ENCODE measurements at regions of chr11 and their contacts with region 1.

Region 1: GRCh38 chr11:94543695-94544645 is at the start of gene FUT4:
- DNase-seq: peak; percentile 70
- H3K4me3 Mint-ChIP-seq: peak within 1 kb of the TSS; percentile 98
- H3K27ac Mint-ChIP-seq: peak within 1 kb of the TSS; percentile 99
- H3K4me1 Mint-ChIP-seq: peaks cover 45% of the 10 kb centered on the region
- H3K27me3 Mint-ChIP-seq: peaks cover 5% of the 10 kb centered on the region
- total RNA-seq, gene FUT4: 8.0 and 8.6 TPM in 2 replicates

Region 2: DNA sequence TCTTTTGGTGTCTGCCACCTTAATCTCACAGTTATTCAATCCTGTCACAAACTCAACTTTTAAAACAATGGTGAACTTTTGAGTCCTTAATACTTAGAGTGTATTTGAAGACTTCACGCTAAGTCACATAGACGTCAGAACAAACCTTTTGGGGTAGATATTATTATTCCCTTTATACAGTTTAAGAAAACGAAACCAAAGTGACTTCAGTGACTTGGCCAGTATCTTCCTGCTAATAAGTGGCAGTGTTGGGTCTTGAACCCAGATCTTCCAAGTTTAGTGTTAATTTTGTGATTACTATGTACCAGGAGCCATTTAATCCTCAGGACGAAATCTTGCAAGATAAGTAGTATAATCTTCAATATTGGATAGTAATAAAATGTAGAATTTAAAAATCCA is 881.8 kb before region 1 on chr11:
- intact Hi-C with region 1: loop called (anchors 5 kb)
- DNase-seq: no peak
- H3K4me3 Mint-ChIP-seq: peak overlapping the region; percentile 89
- H3K27ac Mint-ChIP-seq: peak overlapping the region; percentile 86
- H3K4me1 Mint-ChIP-seq: peaks cover 47% of the 10 kb centered on the region
- H3K27me3 Mint-ChIP-seq: no peaks in the 10 kb centered on the region

Region 3: GRCh38 chr11:93784152-93784934 is 759.6 kb before region 1 on chr11 and contains the start of gene MED17:
- intact Hi-C with region 1: loop called (anchors 2 kb)
- DNase-seq: peak; percentile 87
- H3K4me3 Mint-ChIP-seq: peak within 1 kb of the TSS; percentile 93
- H3K27ac Mint-ChIP-seq: peak within 1 kb of the TSS; percentile 88
- H3K4me1 Mint-ChIP-seq: peaks cover 45% of the 10 kb centered on the region
- H3K27me3 Mint-ChIP-seq: no peaks in the 10 kb centered on the region
- total RNA-seq, gene MED17: 55.8 and 59.4 TPM in 2 replicates

Region 4: DNA sequence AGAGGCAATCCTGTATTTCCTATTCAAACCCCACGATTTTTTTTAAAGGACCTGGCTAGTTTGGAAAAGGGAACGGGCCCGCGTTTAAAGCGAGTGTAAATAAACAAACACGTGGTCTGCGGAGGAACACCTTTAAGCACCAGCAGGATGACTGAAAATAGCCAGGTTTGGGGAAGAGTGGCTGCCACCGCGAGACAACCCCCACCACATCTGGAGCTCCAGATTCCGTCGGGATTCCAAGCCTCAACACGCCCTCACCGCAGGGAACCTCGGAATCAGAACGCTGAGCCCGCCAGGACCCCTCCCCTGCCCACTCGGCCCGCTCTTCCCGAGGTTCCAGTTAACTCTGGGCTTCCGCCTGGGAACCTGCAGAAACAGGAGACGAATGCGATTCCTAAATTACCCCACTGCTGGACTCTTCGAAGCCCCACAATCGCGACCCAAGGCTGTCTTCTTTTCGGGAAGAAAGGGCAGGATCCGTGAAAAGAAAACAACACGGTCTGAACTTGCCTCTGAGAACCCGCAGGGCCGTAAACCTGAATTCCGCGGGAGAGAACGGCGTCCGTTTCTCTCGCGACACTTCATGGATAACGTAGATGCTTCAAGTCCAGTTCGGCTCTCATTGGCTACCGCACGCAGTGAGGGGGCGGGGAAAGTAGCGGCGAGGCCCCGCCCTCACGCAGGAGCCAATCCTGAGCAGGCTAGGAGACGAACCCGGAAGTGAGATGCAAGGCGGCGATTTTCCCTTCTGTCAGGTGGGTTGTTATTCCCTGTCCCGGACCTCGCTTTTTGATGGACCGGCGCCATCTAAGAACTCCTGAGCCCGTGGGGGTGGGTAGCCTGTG is 50.5 kb before region 1 on chr11 and contains the starts of genes ANKRD49 and MRE11:
- intact Hi-C with region 1: loop called (anchors 1 kb)
- DNase-seq: peak; percentile 96
- H3K4me3 Mint-ChIP-seq: peak within 1 kb of the TSS; percentile 94
- H3K27ac Mint-ChIP-seq: peak within 1 kb of the TSS; percentile 92
- H3K4me1 Mint-ChIP-seq: peaks cover 36% of the 10 kb centered on the region
- H3K27me3 Mint-ChIP-seq: no peaks in the 10 kb centered on the region
- total RNA-seq, gene ANKRD49: 20.0 and 21.2 TPM in 2 replicates
- total RNA-seq, gene MRE11: 43.8 and 45.9 TPM in 2 replicates

Region 5: GRCh38 chr11:94602430-94603372 is 58.7 kb after region 1 on chr11:
- intact Hi-C with region 1: loop called (anchors 2 kb)
- DNase-seq: peak; percentile 12
- H3K4me3 Mint-ChIP-seq: no peak overlapping the region
- H3K27ac Mint-ChIP-seq: no peak overlapping the region
- H3K4me1 Mint-ChIP-seq: peaks cover 5% of the 10 kb centered on the region
- H3K27me3 Mint-ChIP-seq: peaks cover 3% of the 10 kb centered on the region

Region 6: DNA sequence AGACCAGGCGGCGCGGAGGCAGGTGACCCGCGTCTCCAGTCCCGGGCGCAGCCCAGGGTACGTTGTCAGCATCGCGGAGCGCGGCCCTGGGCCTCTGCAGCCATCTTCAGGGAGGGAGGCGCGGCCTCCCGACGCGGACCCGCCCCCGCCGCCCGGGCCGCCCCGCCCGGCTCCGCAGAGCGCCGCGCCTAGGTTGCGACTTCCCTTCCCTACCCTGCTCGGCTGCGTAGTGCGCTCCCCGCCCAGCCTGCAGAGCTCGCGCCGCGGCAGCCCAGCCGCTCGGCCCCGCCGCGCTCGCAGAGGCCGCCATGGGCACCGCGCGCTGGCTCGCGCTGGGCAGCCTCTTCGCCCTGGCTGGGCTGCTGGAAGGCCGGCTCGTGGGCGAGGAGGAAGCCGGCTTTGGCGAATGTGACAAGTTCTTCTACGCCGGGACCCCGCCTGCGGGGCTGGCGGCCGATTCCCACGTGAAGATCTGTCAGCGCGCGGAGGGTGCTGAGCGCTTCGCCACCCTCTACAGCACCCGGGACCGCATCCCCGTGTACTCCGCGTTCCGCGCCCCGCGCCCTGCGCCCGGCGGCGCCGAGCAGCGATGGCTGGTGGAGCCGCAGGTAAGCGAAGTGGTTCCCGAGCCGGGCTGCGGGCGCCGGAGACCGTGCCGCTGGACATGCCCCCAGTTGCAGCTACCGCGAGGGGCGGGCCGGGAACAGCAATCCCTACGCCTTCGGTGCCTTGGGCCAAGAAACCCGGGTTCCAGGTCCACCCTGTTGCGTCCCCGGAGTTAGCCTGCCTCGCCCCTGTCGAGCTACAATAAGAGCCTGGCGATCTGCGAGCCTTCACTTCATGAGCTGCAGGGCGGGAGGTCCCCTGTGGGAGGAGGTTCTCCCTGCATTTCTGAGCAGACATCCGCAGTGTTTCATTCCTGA is 545.9 kb after region 1 on chr11 and contains the start of gene ENDOD1:
- intact Hi-C with region 1: loop called (anchors 2 kb)
- DNase-seq: peak; percentile 85
- H3K4me3 Mint-ChIP-seq: peak within 1 kb of the TSS; percentile 89
- H3K27ac Mint-ChIP-seq: peak within 1 kb of the TSS; percentile 96
- H3K4me1 Mint-ChIP-seq: peaks cover 83% of the 10 kb centered on the region
- H3K27me3 Mint-ChIP-seq: no peaks in the 10 kb centered on the region
- total RNA-seq, gene ENDOD1: 33.8 and 34.3 TPM in 2 replicates

Measured in activated T-helper 1 cell treated with anti-CD3 and anti-CD28 coated beads, Interleukin-12 subunit alpha, Interleukin-12 subunit beta, Interleukin-2, Interleukin-4 antibody, amounts not matched to agents 30 ng/mL and 10 ng/mL and 1 ng/mL, durations not matched to agents 14 hours and 24 hours and 36 hours (primary cell).